Naive thymus-derived CD4-positive, alpha-beta T cell (primary cell): ENCODE measurements at regions of chrX and their contacts with region 1.

Region 1: DNA sequence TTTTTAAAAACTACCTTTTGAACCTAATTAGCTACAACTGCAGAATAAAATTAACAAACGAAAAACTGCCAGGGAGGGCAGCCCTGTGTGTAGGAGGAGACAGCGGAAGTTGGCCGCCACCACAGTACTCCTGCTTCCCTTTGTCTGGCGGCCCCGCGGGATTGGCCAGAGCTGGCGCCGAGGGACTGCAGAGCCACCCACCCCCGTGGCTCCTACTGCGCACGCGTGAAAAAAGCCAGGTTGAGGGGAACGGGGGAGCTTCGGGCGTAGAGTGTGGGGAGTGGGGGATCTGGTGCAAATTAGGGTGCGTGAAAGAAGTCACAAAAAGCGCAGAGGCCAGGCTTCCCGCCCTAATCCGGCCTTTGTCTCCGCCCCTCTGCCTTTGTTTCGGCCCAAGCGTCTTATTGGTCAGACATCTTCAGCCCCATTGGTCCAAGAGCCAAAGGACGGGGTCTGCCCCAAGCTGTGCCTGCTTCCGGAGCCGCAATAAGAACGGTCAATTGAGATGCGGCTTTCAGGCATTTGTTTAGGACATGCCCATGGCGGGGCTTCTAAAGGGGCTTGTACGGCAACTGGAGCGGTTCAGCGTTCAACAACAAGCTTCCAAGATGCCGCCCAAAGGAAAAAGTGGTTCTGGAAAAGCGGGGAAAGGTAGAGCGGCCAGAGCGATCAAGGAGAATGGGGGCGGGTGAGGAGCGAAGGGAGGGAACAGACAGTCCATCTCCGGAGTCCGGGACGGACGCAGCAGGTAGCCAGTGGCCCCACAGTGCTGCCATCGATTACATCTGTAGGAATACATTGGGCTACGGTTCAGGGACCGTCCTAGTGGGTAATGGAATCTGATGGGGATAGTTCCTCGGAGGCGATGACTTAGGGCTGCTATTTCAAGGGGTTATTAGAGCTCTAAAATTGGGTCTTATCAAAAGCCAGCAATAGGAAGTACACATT is at the start of gene PIN4:
- DNase-seq: peak; percentile 55 to 83 (median 77)
- ATAC-seq: peak; percentile 94
- H3K4me3 ChIP-seq: peak within 1 kb of the TSS; percentile 65
- H3K4me3 Mint-ChIP-seq: no peak within 1 kb of the TSS
- H3K27ac ChIP-seq: peak within 1 kb of the TSS; percentile 74
- H3K27ac Mint-ChIP-seq: peak within 1 kb of the TSS in 1 of 9 donors; percentile 4
- H3K4me1 ChIP-seq: peaks cover 8 to 19% of the 10 kb centered on the region in 2 donors
- H3K4me1 Mint-ChIP-seq: peaks cover 4 to 24% (median 16%) of the 10 kb centered on the region in 7 donors
- H3K27me3 ChIP-seq: no peaks in the 10 kb centered on the region
- H3K27me3 Mint-ChIP-seq: no peaks in the 10 kb centered on the region
- total RNA-seq, gene PIN4: 2.0 to 13.6 (median 9.5) TPM

Region 2: DNA sequence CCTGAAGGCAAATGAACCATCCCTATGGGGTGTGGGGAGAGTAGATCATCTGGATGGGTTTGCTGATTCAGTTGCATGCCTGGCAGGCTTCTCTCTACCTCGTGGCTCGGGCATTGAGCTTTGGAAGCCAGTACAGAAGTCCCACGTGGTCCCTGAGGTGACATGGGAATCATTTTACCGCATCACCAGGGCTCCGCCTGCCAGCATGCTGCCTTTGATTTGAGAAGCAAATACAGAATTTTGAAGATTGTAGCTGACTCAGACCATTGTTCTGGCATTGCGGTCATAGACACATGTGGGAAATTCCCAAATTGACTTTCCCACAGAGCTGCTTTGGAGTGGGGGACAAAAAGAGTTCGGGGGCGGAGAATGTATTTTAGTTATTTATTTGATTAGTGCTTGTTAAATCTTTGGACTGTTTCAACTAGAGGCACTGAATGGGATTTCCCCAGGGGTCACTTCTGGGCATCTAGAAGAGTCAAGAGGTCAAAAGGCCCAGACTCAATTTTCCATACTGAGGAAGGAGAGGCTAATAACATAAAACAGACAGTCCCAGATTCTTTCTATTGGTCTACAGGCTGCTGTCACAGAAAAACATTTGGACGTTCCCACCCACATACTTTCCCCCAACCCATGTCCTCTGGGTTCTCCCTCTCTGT is 191.6 kb before region 1 on chrX:
- CTCF ChIA-PET with region 1: no interaction called
- POLR2A ChIA-PET with region 1: no interaction called
- intact Hi-C with region 1: no loop called
- DNase-seq: no peak
- ATAC-seq: no peak
- H3K4me3 ChIP-seq: no peak overlapping the region
- H3K4me3 Mint-ChIP-seq: no peak overlapping the region
- H3K27ac ChIP-seq: no peak overlapping the region
- H3K27ac Mint-ChIP-seq: peak overlapping the region in 1 of 9 donors; percentile 11
- H3K4me1 ChIP-seq: peaks cover 0 to 28% of the 10 kb centered on the region in 2 donors
- H3K4me1 Mint-ChIP-seq: peaks cover 0 to 17% (median 8%) of the 10 kb centered on the region in 7 donors
- H3K27me3 ChIP-seq: no peaks in the 10 kb centered on the region
- H3K27me3 Mint-ChIP-seq: peaks cover 0 to 3% (median 0%) of the 10 kb centered on the region in 5 donors

Region 3: GRCh38 chrX:72126539-72127140 is 54.8 kb before region 1 on chrX:
- CTCF ChIA-PET with region 1: interaction called, 3 read pairs
- POLR2A ChIA-PET with region 1: interaction called, 3 read pairs
- intact Hi-C with region 1: loop called (anchors 5 kb)
- DNase-seq: peak; percentile 56 to 83 (median 67)
- ATAC-seq: peak; percentile 87
- H3K4me3 ChIP-seq: no peak overlapping the region
- H3K4me3 Mint-ChIP-seq: no peak overlapping the region
- H3K27ac ChIP-seq: no peak overlapping the region
- H3K27ac Mint-ChIP-seq: no peak overlapping the region
- H3K4me1 ChIP-seq: peaks cover 3 to 42% of the 10 kb centered on the region in 2 donors
- H3K4me1 Mint-ChIP-seq: peaks cover 0 to 34% (median 3%) of the 10 kb centered on the region in 7 donors
- H3K27me3 ChIP-seq: no peaks in the 10 kb centered on the region
- H3K27me3 Mint-ChIP-seq: peaks cover 0 to 63% (median 7%) of the 10 kb centered on the region in 5 donors

Region 4: DNA sequence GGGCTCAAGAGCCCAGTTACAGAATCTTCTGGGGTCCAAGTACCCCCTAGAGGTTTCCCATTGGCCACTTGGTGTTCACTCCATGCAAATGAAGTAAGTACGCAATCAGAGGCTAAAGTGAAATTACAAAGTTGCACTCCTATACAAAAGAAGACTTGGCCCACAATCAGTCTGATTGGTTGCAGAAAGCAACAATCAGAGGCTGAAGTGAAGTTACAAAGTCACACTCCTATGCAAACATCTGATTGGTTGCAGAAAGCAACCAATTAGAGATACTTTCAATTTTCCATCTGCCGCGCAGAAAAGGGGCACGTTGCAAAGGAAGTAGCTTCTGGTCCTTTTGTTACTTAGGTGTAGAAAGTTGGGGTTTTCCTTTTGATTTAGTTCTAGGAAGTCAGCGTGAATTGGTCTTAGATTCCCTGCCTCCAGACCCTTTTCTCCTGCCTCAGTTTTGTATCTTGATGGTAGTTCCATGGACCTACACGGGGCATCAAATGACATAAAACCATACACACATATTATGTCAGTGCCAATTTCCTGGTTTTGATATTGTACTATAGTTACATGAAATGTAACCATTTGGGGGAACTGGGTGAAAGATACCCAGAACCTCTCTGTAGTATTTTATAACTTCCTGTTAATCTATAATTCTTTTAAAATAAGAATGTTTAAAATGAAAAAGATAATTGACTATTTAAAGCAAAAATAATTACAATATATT is 12.3 kb before region 1 on chrX:
- CTCF ChIA-PET with region 1: interaction called, 4 read pairs
- POLR2A ChIA-PET with region 1: interaction called, 9 read pairs
- intact Hi-C with region 1: loop called (anchors 1 kb)
- DNase-seq: peak in 7 of 9 donors; percentile 52 to 71 (median 58)
- ATAC-seq: peak; percentile 94
- H3K4me3 ChIP-seq: peak overlapping the region; percentile 28
- H3K4me3 Mint-ChIP-seq: peak overlapping the region; percentile 46 to 89 (median 84)
- H3K27ac ChIP-seq: peak overlapping the region; percentile 66
- H3K27ac Mint-ChIP-seq: peak overlapping the region; percentile 87 to 97 (median 90)
- H3K4me1 ChIP-seq: no peaks in the 10 kb centered on the region
- H3K4me1 Mint-ChIP-seq: peaks cover 0 to 10% (median 5%) of the 10 kb centered on the region in 7 donors
- H3K27me3 ChIP-seq: no peaks in the 10 kb centered on the region
- H3K27me3 Mint-ChIP-seq: peaks cover 0 to 5% (median 0%) of the 10 kb centered on the region in 5 donors

Region 5: GRCh38 chrX:72269671-72270251 is 88.3 kb after region 1 on chrX:
- CTCF ChIA-PET with region 1: no interaction called
- POLR2A ChIA-PET with region 1: interaction called, 3 read pairs
- intact Hi-C with region 1: loop called in 1 of 2 experiments (anchors 10 kb)
- DNase-seq: no peak
- ATAC-seq: no peak
- H3K4me3 ChIP-seq: no peak overlapping the region
- H3K4me3 Mint-ChIP-seq: no peak overlapping the region
- H3K27ac ChIP-seq: no peak overlapping the region
- H3K27ac Mint-ChIP-seq: peak overlapping the region in 3 of 9 donors; percentile 33 to 78 (median 38)
- H3K4me1 ChIP-seq: peaks cover 6 to 17% of the 10 kb centered on the region in 2 donors
- H3K4me1 Mint-ChIP-seq: peaks cover 10 to 41% (median 24%) of the 10 kb centered on the region in 7 donors
- H3K27me3 ChIP-seq: no peaks in the 10 kb centered on the region
- H3K27me3 Mint-ChIP-seq: no peaks in the 10 kb centered on the region

Region 6: DNA sequence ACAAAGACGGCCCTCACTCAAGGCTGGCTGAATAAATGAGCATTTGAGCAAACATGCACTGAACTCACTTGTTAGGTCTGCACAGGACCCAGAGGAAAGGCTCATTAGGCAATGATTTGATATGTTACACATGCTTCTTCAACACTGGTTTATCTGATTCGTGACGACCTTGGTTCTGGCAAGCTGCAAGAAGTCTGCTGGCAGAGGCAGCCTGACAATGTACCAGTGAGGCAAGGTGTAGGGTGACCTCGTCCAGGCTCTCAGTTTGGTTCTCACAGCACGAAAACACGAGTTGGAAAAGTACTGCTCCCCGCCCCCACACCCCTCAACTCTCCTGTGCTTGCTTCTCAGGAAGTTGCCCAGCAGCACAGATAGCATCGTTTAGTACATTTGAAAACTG is 187.3 kb after region 1 on chrX:
- CTCF ChIA-PET with region 1: no interaction called
- POLR2A ChIA-PET with region 1: no interaction called
- intact Hi-C with region 1: no loop called
- DNase-seq: no peak
- ATAC-seq: no peak
- H3K4me3 ChIP-seq: no peak overlapping the region
- H3K4me3 Mint-ChIP-seq: no peak overlapping the region
- H3K27ac ChIP-seq: no peak overlapping the region
- H3K27ac Mint-ChIP-seq: no peak overlapping the region
- H3K4me1 ChIP-seq: no peaks in the 10 kb centered on the region
- H3K4me1 Mint-ChIP-seq: peaks cover 0 to 4% (median 0%) of the 10 kb centered on the region in 7 donors
- H3K27me3 ChIP-seq: no peaks in the 10 kb centered on the region
- H3K27me3 Mint-ChIP-seq: no peaks in the 10 kb centered on the region

Region 7: GRCh38 chrX:72572248-72573157 is 391.1 kb after region 1 on chrX and contains the start of gene HDAC8:
- CTCF ChIA-PET with region 1: no interaction called
- POLR2A ChIA-PET with region 1: no interaction called
- intact Hi-C with region 1: loop called in 1 of 2 experiments (anchors 1 kb)
- DNase-seq: peak; percentile 7 to 49 (median 29)
- ATAC-seq: peak; percentile 91
- H3K4me3 ChIP-seq: peak within 1 kb of the TSS; percentile 97
- H3K4me3 Mint-ChIP-seq: peak within 1 kb of the TSS; percentile 91 to 98 (median 96)
- H3K27ac ChIP-seq: peak within 1 kb of the TSS; percentile 71
- H3K27ac Mint-ChIP-seq: peak within 1 kb of the TSS; percentile 36 to 91 (median 87)
- H3K4me1 ChIP-seq: peaks cover 4 to 6% of the 10 kb centered on the region in 2 donors
- H3K4me1 Mint-ChIP-seq: peaks cover 0 to 10% (median 6%) of the 10 kb centered on the region in 7 donors
- H3K27me3 ChIP-seq: no peaks in the 10 kb centered on the region
- H3K27me3 Mint-ChIP-seq: peaks cover 0 to 11% (median 0%) of the 10 kb centered on the region in 5 donors
- total RNA-seq, gene HDAC8: 13.1 to 30.6 (median 19.7) TPM